Dorsolateral prefrontal cortex (tissue), 120 donors: ENCODE measurements at regions of chr12 and their contacts with region 1.

Region 1: GRCh38 chr12:89461649-89462612 is 62.7 kb downstream of the GALNT4 start:
- DNase-seq: no peak
- H3K4me3 ChIP-seq: peak overlapping the region in 41 of 59 donors; percentile 1 to 44 (median 22)
- H3K27ac ChIP-seq: peak overlapping the region in 26 of 59 donors; percentile 3 to 70 (median 28)
- H3K27me3 ChIP-seq: no peaks in the 10 kb centered on the region
- CTCF ChIP-seq: peak; percentile 60 to 91 (median 76)

Region 2: DNA sequence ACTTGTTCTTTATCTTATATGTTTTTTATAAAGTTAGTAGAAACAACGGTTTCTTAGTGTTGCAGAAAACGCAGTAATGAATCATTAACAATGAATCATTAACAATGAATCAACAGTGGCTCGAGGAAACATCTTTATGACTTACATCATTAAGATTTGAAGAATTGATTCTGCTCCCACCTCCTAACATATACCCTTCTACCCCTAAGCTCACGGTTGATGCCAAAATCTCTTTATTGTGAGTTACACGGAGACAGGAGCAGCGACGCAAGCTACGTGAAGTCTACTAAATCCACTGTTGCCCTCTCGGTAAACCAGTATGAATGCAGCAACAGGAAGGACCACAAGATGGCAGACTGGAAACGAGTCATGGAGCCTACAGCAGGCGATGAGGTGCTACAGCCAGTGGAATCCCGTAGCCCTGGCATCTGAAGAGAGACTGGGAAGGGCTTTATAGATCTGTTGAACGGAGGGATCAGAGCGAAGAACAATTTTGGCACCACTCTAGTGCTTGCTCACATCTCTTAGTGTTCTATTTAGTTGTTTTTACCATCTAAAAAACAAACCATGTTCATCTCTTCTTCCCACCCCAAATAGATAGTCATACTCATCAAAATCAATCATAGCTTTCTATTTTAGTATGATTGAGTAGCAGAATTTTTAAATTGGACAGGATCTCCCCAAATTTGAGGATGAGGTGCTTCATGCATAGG is 442.4 kb before region 1 on chr12:
- intact Hi-C with region 1: loop called (anchors 2 to 5 kb)
- DNase-seq: peak; percentile 24 to 89 (median 77)
- H3K4me3 ChIP-seq: peak overlapping the region; percentile 11 to 71 (median 50)
- H3K27ac ChIP-seq: peak overlapping the region in 3 of 59 donors; percentile 22 to 53 (median 49)
- H3K27me3 ChIP-seq: no peaks in the 10 kb centered on the region
- CTCF ChIP-seq: peak; percentile 46 to 95 (median 83)

Region 3: GRCh38 chr12:89051065-89051677 is 410.8 kb before region 1 on chr12:
- intact Hi-C with region 1: loop called (anchors 1 to 5 kb)
- DNase-seq: no peak
- H3K4me3 ChIP-seq: no peak overlapping the region
- H3K27ac ChIP-seq: no peak overlapping the region
- H3K27me3 ChIP-seq: no peaks in the 10 kb centered on the region
- CTCF ChIP-seq: peak; percentile 80 to 98 (median 91)

Region 4: DNA sequence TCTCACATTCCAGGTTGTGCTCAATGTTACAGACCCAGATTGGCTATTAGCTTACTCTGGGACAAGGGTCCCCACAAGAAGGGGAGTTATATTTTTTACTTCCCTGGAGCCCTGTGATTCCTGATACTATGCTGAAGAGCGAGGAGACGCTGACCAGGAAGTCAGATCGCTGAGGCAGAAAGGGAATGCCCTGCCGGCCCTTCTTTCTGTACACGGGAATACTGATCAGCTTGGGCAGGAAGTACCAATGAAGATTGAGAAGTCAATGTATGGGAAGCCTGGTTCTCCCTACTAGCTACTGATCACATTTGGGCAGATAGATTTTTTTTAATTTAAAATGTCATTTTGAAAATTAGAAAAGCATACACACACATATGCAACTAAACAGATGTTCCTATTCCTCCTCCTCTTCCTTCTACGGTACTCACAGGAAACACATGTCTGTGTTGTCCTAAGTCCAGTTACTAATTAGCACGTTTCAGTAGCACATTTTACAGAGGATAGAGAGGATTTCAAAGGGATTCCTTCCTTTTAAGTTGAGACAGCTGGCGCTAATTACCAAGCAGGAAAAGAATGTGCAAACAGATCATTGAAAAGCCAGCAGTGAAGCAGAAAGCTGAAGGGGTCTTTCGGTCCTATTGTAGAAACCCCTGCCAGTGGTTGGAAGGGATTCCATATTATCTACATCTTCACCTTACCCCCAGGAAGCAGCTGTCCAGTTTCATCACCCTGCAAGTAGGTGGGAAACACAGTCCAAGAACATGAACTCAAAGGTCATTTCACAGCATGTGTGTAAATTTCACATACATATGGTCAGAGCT is 402.0 kb before region 1 on chr12:
- intact Hi-C with region 1: loop called in 1 of 2 experiments (anchors 5 kb)
- DNase-seq: no peak
- H3K4me3 ChIP-seq: peak overlapping the region in 1 of 59 donors; percentile 23
- H3K27ac ChIP-seq: no peak overlapping the region
- H3K27me3 ChIP-seq: no peaks in the 10 kb centered on the region
- CTCF ChIP-seq: no peak

Region 5: DNA sequence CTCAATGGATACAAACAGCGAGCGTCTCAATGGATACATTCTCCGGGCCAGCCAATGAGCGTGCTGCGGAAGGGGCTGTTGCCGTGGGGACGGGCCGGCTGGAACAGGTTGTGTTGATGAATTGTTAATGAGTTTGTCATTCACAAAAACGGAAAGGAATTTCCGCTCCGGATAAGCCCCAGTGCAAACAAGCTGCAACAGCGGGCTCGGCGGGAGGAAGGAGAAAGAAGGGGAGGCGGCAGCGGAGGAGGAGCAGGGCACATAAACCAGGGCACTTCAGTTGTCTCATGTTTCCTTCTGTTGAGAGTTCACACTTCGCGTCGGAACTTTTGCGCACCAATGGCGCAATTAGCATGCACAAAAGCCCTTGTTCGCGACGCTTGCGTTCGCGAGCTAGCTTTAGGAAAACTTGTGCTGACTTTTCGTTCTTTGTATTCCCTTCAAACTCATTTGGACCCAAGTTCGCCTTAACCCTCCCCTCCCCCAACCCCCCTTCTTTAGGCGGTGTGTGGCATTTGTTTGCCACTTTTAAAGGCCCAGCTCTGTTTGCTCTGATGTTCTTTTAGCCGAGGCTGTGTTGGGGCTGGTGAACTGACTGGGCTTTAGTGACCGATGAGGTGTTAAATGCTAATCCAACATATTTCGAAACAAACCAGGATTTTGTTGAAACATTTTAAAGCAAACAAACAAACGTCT is 109.3 kb before region 1 on chr12 and contains the start of gene DUSP6:
- intact Hi-C with region 1: loop called (anchors 5 kb)
- DNase-seq: peak; percentile 79 to 98 (median 93)
- H3K4me3 ChIP-seq: peak within 1 kb of the TSS; percentile 44 to 93 (median 84)
- H3K27ac ChIP-seq: peak within 1 kb of the TSS; percentile 40 to 98 (median 91)
- H3K27me3 ChIP-seq: peaks cover 0 to 7% (median 0%) of the 10 kb centered on the region in 45 donors
- CTCF ChIP-seq: peak in 1 of 56 donors; percentile 15
- total RNA-seq, gene DUSP6: 8.1 to 87.8 (median 26.2) TPM

Region 6: GRCh38 chr12:91009319-91009950 is 1547.5 kb after region 1 on chr12:
- intact Hi-C with region 1: no loop called
- DNase-seq: no peak
- H3K4me3 ChIP-seq: no peak overlapping the region
- H3K27ac ChIP-seq: no peak overlapping the region
- H3K27me3 ChIP-seq: no peaks in the 10 kb centered on the region
- CTCF ChIP-seq: no peak